ENCODE measurements at regions of chr1 and their contacts with region 1.

Region 1: GRCh38 chr1:200468264-200469001 is 58.6 kb upstream of the ZNF281 start:
- DNase-seq: no peak
- H3K4me3 ChIP-seq: no peak overlapping the region
- CTCF ChIP-seq: no peak

Region 2: DNA sequence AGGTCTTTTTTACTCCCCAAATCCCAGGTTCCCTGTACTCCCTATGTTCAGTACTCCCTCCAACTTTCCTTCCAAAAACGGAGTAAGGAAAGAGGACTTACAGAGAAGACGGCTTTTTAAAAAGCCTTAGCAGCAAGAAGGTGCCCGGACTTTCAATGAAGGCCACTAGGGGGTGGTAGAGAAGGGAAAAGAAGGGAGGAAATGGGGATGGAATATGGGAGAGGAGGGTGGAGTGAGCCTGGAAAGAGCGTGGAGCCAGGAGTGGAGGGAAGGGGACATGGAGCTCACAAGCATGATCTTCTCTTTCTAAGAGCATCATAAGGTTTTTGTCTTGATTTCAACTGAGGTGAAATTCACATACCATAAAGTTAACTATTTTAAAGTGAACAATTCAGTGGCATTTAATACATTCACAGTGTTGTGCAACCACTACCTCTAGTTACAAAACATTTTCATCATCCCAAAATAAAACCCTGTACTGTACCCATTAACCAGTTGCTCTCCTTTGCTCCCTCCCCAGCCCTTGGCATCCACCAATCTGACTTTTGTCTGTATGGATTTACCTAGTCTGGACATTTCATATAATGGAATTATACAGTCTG is 188.5 kb before region 1 on chr1:
- in situ Hi-C with region 1: loop called (anchors 5 kb)
- DNase-seq: peak; percentile 36
- H3K4me3 ChIP-seq: no peak overlapping the region
- CTCF ChIP-seq: peak; percentile 67

Region 3: GRCh38 chr1:200405260-200405659 is 63.2 kb before region 1 on chr1:
- in situ Hi-C with region 1: no loop called
- DNase-seq: no peak
- H3K4me3 ChIP-seq: no peak overlapping the region
- CTCF ChIP-seq: no peak

Region 4: GRCh38 chr1:200415693-200416593 is 52.5 kb before region 1 on chr1:
- in situ Hi-C with region 1: no loop called
- DNase-seq: peak; percentile 90
- H3K4me3 ChIP-seq: no peak overlapping the region
- CTCF ChIP-seq: no peak

Measured in astrocyte of the cerebellum (primary cell).